Endothelial cell of umbilical vein (primary cell): ENCODE measurements at regions of chr13 and their contacts with region 1.

Region 1: DNA sequence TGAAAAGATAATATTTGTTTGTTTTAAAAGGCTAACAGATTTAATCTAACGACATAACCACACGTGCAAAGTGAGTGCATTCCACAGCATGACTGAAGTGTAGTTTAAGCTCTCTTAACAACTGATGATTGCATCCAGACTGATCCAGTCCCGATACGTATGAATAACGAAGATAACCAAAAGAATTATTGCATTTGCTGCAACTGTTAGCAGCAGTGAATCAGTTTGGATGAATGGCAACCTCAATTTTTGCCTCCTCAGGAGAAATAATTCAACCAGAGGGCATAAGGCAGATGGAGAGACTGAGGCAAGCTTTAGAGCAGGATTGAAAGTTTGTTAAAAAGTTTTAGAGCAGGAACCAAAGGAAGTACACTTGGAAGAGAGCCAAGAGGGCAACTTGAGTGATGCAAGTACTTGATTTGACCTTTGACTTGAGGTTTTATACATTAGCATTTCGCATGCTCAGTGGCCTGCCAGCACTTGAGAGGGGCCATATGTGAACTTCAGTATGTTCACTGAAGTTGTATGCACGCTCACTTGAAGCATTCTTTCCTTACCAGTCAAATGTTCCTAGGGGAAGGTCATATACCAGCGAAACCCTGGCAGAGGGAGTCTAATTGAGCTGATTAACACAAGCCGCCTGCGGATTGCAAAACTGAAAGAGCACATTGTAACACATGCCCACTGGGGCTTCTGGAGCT is 835.0 kb upstream of the PCDH20 start:
- DNase-seq: no peak
- H3K4me3 ChIP-seq: no peak overlapping the region
- H3K27ac ChIP-seq: no peak overlapping the region
- H3K4me1 ChIP-seq: no peaks in the 10 kb centered on the region
- H3K27me3 ChIP-seq: no peaks in the 10 kb centered on the region
- CTCF ChIP-seq: no peak
- POLR2A ChIP-seq: no peak

Region 2: DNA sequence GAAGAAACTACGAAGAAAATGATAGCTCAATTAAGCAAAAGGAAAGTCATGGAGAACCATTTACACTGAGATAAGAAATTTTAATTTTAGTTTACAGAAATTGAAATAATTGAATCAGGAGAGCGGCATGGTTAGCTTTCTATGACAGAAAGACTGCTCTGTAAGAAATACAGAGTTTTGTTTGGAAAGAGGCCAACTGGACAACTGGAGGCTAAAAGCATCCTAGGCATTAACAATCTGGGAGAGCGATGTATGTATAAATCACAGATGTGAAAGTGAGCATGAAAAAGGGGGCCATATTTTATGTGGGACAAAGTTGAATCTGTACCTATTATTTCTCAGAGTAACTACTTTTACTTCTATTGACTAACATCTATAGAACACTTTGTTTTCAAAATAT is 773.8 kb after region 1 on chr13:
- CTCF ChIA-PET with region 1: no interaction called
- POLR2A ChIA-PET with region 1: no interaction called
- dilution Hi-C with region 1: no loop called
- intact Hi-C with region 1: loop called (anchors 5 kb)
- DNase-seq: no peak
- H3K4me3 ChIP-seq: no peak overlapping the region
- H3K27ac ChIP-seq: no peak overlapping the region
- H3K4me1 ChIP-seq: no peaks in the 10 kb centered on the region
- H3K27me3 ChIP-seq: no peaks in the 10 kb centered on the region
- CTCF ChIP-seq: no peak
- POLR2A ChIP-seq: no peak